Posterior cingulate gyrus (tissue), 11 donors: ENCODE measurements at regions of chr9 and their contacts with region 1.

Region 1: GRCh38 chr9:129036241-129036922 is at the start of gene MIGA2:
- DNase-seq: peak; percentile 96 to 100 (median 98)

Region 2: DNA sequence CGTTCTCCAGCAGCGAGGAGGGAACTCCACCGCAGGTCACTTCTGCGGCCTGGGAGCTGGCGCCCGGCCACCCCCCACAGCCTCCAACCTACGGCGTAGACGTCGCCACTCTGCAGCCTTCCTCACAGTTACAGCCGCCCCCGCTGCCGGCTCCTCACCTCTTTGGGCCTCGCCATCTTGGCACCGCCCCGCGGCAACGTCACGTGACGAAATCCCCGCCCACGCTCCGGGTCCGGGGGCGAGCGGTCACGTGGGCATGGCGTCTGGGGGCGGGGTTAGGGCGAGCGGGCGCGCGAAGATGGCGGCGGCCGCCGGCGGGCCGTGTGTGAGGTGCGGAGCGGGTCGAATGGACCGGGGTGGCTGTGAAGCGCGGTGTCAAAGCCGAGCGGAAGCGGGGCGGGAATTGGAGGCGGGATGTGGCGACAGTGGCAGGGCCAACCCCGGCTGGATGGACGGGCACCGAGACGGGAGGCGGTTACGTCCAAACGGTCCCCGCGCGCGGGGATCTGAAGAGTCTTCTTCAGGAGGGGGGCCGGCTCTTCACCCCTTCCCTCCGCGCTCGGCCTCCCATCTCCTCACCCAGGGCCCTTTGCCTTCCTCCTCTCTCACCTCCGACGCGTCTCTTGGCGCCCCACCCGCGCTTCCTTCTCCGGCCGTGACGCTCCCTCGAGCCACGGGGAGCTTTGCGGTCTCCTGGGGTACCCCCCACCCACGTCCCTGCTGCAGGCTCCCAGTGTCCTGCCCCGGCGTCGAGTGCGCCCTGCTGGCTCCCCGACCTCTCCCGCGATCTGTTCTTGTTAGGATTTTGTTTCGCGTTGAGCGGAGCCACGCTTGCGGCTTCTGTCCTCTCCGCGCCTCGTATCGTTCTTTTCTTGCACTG is 88.7 kb before region 1 on chr9 and contains the starts of genes DOLK and NUP188:
- intact Hi-C with region 1: loop called (anchors 5 kb)
- DNase-seq: peak; percentile 94 to 99 (median 98)

Region 3: DNA sequence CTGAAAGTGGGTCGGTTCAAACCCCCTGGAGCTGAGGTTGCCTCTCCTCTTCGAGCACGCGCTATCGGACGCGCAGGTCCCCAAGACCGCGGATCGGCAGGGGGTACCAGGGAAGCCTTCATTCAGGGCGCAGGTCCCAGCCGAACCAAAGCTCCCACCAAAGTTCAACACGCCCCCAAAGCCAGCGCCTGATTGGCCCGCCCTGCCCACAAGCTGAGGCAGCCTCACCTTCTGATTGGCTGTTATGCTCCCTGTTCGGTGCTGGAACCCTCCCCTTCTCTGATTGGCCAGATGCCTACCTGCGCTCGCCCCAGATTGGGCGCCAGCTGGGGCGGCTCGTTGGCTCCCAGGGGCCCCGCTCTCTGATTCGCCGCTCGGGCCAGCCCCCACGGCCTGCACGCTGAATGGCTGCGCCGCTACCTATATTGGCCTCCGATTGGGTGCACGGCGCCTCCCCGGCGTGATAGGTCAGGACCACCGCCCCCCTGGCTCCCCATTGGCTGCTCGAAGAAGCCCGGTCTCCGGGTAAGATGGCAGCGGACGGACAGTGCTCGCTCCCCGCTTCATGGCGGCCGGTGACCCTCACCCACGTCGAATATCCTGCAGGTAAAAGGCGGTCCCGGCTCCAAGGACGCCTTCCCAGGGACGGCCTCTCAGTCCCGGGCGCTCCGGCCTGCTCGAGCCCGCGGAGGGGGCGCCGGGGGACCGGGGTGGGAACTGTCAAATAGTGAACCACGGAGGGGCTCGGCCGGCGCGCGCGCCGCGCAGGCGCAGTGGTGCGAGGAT is 44.4 kb after region 1 on chr9 and contains the start of gene DOLPP1:
- intact Hi-C with region 1: loop called (anchors 2 kb)
- DNase-seq: peak; percentile 96 to 100 (median 98)